ENCODE measurements at regions of chr6 and their contacts with region 1.

Region 1: GRCh38 chr6:87407901-87408720 is at the start of gene CFAP206:
- DNase-seq: peak; percentile 90
- H3K27ac ChIP-seq: peak within 1 kb of the TSS; percentile 79
- CTCF ChIP-seq: peak; percentile 19; the same call in 1 of the 2 replicates

Region 2: GRCh38 chr6:87350516-87350915 is 57.6 kb before region 1 on chr6:
- CTCF ChIA-PET with region 1: no interaction called
- POLR2A ChIA-PET with region 1: no interaction called
- DNase-seq: no peak
- H3K27ac ChIP-seq: no peak overlapping the region
- CTCF ChIP-seq: no peak

Region 3: GRCh38 chr6:87421575-87421974 is 13.5 kb after region 1 on chr6:
- CTCF ChIA-PET with region 1: no interaction called
- POLR2A ChIA-PET with region 1: no interaction called
- DNase-seq: peak; percentile 30
- H3K27ac ChIP-seq: no peak overlapping the region
- CTCF ChIP-seq: no peak

Region 4: GRCh38 chr6:87504441-87504840 is 96.3 kb after region 1 on chr6:
- CTCF ChIA-PET with region 1: no interaction called
- POLR2A ChIA-PET with region 1: no interaction called
- DNase-seq: no peak
- H3K27ac ChIP-seq: no peak overlapping the region
- CTCF ChIP-seq: no peak

Region 5: DNA sequence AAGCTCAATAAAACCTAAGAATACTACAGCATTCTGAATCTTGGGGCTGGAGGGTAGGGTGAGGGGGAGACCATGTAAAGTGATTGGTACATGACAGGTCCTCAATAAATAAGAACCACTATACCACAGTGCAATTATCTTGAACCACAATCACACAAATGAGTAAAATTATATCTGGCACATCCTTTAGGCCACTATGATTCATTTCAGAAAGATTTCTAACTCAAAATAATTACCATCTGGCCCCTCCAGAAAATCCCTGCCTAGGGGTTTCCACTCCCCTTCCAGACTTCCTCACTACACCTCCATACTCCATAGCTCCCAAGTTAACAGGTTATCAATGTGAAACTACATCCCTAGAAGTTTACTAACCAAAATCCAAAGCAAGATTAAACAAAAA is 274.2 kb after region 1 on chr6:
- CTCF ChIA-PET with region 1: no interaction called
- POLR2A ChIA-PET with region 1: interaction called, 10 read pairs
- DNase-seq: no peak
- H3K27ac ChIP-seq: no peak overlapping the region
- CTCF ChIP-seq: no peak

Measured in RWPE1 (cell line).